ENCODE measurements at regions of chr7 and their contacts with region 1.

Region 1: DNA sequence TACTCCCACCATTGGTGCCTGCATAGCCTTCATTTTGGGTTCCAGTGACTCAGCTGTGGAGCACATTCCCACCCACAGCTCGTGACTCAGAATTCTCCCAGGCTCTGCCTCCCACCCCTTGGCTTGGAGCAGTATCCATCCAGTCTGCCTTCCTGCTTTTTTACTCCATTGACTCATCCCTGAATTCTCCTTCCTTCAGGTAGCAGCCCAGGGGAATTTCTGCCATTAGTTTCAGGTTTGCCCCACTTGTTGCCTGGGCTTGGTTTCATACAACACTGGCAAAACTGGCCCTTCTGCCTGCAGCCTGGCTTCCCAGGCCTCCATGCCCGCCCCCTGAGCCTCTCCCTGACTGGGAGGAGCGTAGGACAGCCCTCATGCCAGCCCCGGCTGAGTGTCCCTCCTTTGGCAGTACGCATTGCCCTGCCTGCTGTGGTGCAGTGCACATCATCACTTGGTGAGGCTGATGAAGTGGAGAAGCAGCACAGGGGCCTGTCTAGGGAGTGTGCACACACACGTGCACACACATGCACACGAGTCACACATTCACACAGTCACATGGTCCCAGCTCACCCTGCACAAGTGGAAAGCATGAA is 55.0 kb downstream of the SNX10 start:
- DNase-seq: no peak

Region 2: DNA sequence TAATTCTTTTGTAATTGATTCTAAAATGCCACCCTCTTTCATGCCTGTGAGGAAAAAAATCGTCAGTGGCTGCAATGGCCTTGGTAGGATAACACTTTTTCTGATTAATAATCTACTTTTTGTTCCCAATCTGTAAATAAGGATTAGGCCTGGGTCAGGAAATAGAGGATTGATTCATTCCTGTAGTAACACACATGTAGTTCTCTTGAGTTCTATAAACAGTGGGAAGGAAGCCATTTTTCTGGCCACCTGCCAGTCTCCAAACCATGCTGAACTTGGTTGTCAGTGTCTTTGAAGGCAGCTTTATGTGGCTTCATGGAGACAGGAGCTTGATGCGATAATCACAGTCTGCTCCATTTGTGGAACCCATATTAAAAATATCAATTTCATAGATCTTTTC is 364.0 kb before region 1 on chr7:
- intact Hi-C with region 1: loop called in 1 of 2 experiments (anchors 5 kb)
- DNase-seq: no peak

Region 3: GRCh38 chr7:26083113-26083512 is 263.6 kb before region 1 on chr7:
- intact Hi-C with region 1: loop called in 1 of 2 experiments (anchors 10 kb)
- DNase-seq: no peak

Region 4: DNA sequence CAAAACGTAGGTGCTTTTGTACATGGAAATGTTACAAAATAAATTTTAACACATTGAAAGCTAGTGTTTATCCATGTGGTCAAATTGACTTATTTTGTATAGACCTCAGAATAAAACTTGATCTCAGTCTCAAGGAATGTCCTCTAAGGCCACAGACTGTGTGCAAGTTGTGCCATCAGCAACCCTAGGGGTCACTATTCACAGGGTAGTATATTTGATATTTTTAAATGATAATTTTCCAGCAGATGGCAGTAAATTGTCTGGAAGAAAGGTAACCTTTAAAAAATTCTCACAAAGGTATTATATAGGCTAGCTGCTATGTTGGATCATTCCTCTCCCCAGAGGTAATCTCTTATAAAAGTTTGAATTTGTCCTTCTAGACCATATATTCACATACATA is 67.9 kb before region 1 on chr7:
- intact Hi-C with region 1: no loop called
- DNase-seq: no peak